H1 (cell line): ENCODE measurements at regions of chr20 and their contacts with region 1.

Region 1: GRCh38 chr20:31934968-31935764 is 16.7 kb downstream of the PDRG1 start:
- DNase-seq: peak; percentile 50 to 65
- H3K4me3 ChIP-seq: no peak overlapping the region
- H3K27ac ChIP-seq: no peak overlapping the region
- H3K4me1 ChIP-seq: peaks cover 0 to 8% (median 4%) of the 10 kb centered on the region in 4 experiments; a peak in 6 of 7 replicates
- H3K27me3 ChIP-seq: peaks cover 2 to 12% (median 6%) of the 10 kb centered on the region in 4 experiments; a peak in 4 of 7 replicates
- CTCF ChIP-seq: peak; percentile 67 to 96 (median 77)
- EP300 ChIP-seq: no peak
- POLR2A ChIP-seq: no peak
- RAD21 ChIP-seq: peak; percentile 72 to 82

Region 2: GRCh38 chr20:31856516-31856915 is 78.7 kb before region 1 on chr20:
- CTCF ChIA-PET with region 1: interaction called, 48 read pairs
- POLR2A ChIA-PET with region 1: interaction called, 3 read pairs
- DNase-seq: no peak
- H3K4me3 ChIP-seq: no peak overlapping the region
- H3K27ac ChIP-seq: no peak overlapping the region
- H3K4me1 ChIP-seq: peaks cover 3 to 25% (median 11%) of the 10 kb centered on the region in 4 experiments; a peak in 6 of 7 replicates
- H3K27me3 ChIP-seq: peaks cover 0 to 15% (median 13%) of the 10 kb centered on the region in 4 experiments; a peak in 4 of 7 replicates
- CTCF ChIP-seq: no peak
- EP300 ChIP-seq: no peak
- POLR2A ChIP-seq: no peak
- RAD21 ChIP-seq: no peak

Region 3: GRCh38 chr20:31913431-31914157 is 21.6 kb before region 1 on chr20:
- CTCF ChIA-PET with region 1: interaction called, 19 read pairs
- POLR2A ChIA-PET with region 1: interaction called, 6 read pairs
- DNase-seq: no peak
- H3K4me3 ChIP-seq: no peak overlapping the region
- H3K27ac ChIP-seq: no peak overlapping the region
- H3K4me1 ChIP-seq: peaks cover 15 to 30% (median 21%) of the 10 kb centered on the region in 4 experiments
- H3K27me3 ChIP-seq: no peaks in the 10 kb centered on the region; a peak in 1 of 7 replicates
- CTCF ChIP-seq: no peak
- EP300 ChIP-seq: no peak
- POLR2A ChIP-seq: no peak
- RAD21 ChIP-seq: no peak

Region 4: DNA sequence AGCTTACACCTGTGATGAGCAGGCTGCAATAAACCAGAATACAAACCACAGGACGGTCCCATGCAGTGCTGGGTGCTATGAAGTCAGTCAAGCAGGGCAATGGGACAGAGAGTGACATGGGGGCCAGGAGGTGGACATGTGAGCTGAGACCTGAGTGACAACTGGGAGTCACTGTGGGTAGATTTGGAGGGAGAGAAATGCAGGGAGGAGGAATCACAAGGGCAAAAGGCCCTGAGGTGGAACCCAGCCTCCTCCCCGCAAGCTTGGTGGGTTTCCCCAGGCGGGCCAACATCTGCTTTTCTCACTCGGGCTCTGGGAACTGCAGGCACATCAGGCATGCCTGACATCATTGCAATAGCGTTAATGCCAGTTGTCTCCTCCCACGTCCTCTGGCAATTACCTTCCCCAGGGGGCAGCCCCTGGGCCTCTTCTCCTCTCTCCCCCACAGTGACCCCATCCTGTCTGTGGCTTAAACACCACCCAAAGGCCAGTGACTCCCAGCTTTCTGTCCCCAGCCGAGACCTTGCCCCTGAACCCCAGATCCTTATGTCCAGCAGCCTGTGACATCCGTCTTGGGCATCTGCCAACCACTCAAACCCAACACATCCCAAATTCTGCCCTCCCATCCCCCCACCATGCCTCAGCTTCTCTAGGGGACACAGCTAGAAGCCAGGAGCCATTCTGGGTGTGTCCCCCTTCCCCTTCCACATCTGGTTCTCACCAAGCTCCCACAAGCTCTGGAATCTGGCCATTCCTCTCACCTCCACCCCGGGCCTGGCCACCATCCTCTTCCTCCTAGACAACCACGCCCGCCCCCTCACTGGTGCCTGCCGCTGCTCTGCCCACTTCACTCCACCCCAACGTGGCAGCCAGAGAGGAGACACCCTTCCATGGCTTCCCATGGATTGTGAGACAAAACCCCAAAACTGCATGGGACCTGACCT is 11.5 kb before region 1 on chr20:
- CTCF ChIA-PET with region 1: interaction called, 19 read pairs
- POLR2A ChIA-PET with region 1: interaction called, 6 read pairs
- DNase-seq: no peak
- H3K4me3 ChIP-seq: no peak overlapping the region
- H3K27ac ChIP-seq: no peak overlapping the region
- H3K4me1 ChIP-seq: peaks cover 0 to 22% (median 16%) of the 10 kb centered on the region in 4 experiments; a peak in 6 of 7 replicates
- H3K27me3 ChIP-seq: no peaks in the 10 kb centered on the region
- CTCF ChIP-seq: no peak
- EP300 ChIP-seq: no peak
- POLR2A ChIP-seq: no peak
- RAD21 ChIP-seq: no peak

Region 5: DNA sequence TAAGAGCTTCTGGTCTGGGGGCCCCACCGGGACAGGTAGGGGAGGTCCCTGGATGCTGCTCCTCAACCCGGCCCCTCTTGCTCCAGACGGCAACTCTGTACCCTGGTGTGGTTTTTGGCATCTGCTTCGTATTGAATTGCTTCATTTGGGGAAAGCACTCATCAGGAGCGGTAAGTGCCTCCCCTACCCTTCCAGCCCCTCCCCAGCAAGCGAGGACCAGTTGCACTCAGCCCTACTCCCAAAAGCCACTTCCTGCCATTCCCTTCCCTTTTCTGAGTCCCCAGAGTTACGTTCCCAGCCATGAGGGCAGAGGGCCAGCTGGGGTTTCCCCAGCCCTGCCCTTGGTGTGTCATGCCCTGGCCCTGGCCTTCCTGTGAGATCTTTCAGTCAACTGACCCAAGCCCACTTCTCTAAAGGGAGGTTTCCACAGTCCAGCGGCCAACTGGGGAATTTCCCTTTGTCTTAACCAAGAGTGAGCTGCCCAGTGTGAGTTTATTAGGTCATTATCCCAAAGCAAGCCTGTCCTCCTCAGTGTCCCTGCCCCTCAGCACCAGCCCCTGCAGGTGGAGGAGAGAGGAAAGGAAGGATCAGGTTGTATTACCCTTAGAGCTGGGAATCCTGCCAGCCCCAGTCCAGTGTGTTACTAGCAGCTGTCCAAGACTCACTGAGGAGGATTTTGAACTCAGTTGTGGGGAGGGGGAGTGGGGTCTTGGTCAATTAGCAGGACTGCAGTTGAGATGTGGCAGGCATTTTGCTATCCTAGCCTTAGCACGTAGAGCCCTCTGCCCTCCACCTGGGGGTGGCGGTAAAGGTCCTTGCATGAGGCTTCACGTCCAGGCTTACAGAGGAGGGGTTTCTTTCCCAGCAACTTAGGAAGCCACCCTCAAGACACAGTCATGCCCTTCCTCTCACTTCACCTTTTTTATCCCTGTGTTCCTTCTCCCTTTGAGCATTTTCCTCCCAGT is 220.1 kb after region 1 on chr20:
- CTCF ChIA-PET with region 1: no interaction called
- POLR2A ChIA-PET with region 1: no interaction called
- DNase-seq: peak; percentile 47 to 62
- H3K4me3 ChIP-seq: no peak overlapping the region
- H3K27ac ChIP-seq: no peak overlapping the region; the same call in 1 of the 2 replicates
- H3K4me1 ChIP-seq: peaks cover 0 to 2% (median 0%) of the 10 kb centered on the region in 4 experiments; a peak in 2 of 7 replicates
- H3K27me3 ChIP-seq: no peaks in the 10 kb centered on the region
- CTCF ChIP-seq: peak; percentile 75 to 91 (median 91)
- EP300 ChIP-seq: no peak
- POLR2A ChIP-seq: 0 out of 3 replicates have a peak, but pooled peaks of 1 of the 2 experiments have one; percentile 21
- RAD21 ChIP-seq: peak; percentile 88